Cardiac septum (tissue), 1 donor: ENCODE measurements at regions of chr18 and their contacts with region 1.

Region 1: GRCh38 chr18:62714671-62715435 is 488 bp upstream of the PHLPP1 start:
- DNase-seq: peak; percentile 100

Region 2: DNA sequence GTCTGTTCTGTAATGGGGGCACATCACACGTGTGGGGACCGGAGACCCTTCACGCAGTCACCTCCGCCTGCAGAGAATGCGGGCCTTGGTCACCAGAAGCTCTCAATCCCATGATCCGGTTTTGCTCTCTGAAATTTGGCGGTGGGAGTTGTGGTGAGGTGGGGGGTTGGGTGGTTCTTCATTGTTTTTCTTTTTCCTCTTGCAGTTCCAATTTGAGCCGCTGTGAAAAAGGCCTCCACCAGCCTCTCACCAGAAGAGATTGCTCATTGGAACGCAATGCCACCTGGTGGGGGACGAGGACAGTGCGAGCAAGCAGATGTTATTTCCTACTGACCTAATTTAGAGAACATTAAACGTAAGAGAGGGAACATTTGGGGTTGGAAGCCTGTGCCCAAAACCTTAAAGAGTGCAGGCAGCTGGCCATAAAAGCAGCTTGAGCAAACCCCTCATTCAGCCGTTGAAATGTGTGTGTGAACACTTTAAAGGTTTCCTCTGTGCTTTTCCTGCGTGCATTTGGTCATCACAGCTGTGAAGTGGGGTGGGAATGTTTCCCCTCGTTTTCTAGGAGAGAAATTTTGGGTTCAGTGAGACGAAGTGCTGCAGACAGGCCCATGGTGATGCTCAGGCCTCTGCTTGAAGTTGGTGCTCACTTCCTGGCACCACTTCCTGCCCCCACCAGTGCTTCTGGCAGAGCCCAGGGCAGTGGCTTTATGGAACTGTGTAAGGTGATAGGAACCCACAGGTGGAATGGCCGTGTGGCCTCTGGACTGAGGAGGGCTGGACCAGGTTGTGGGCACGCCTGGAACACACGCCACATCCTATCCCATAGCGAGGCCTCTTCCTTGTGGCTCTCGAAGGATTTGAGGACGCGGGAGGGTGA is 130.4 kb before region 1 on chr18:
- intact Hi-C with region 1: loop called (anchors 5 kb)
- DNase-seq: peak; percentile 90

Region 3: GRCh38 chr18:62850619-62851309 is 135.9 kb after region 1 on chr18:
- intact Hi-C with region 1: loop called (anchors 5 kb)
- DNase-seq: no peak

Region 4: DNA sequence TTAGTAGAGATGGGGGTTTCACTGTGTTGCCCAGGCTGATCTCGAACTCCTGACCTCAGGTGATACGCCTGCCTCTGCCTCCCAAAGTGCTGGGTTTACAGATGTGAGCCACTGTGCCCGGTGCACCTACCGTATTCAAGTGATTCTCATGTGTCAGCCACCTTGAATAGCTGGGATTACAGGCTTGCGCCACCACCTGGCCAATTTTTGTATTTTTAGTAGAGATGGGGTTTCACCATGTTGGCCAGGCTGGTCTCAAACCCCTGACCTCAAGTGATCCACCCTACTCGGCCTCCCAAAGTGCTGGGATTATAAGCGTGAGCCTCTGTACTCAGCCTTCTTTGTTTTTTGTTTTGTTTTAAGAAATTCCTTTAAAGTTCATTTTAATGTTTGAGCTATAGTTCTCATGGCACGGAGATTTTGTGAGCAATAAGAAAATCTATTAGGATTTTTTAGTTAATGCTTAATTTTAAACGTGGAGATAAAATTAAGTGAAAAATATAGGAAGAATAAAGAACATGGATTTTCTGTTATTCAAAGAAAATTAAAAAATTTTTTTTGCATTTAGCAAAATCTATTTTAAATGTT is 243.1 kb after region 1 on chr18:
- intact Hi-C with region 1: loop called (anchors 5 kb)
- DNase-seq: no peak